Naive thymus-derived CD4-positive, alpha-beta T cell (primary cell): ENCODE measurements at regions of chr7 and their contacts with region 1.

Region 1: GRCh38 chr7:100126931-100127865 is at the start of gene MBLAC1:
- DNase-seq: peak; percentile 80 to 95 (median 91)
- ATAC-seq: peak; percentile 95
- H3K4me3 ChIP-seq: peak within 1 kb of the TSS; percentile 99
- H3K4me3 Mint-ChIP-seq: peak within 1 kb of the TSS; percentile 95 to 100 (median 98)
- H3K27ac ChIP-seq: peak within 1 kb of the TSS; percentile 98
- H3K27ac Mint-ChIP-seq: peak within 1 kb of the TSS; percentile 98 to 100 (median 99)
- H3K4me1 ChIP-seq: peaks cover 20 to 25% of the 10 kb centered on the region in 2 donors
- H3K4me1 Mint-ChIP-seq: peaks cover 13 to 46% (median 26%) of the 10 kb centered on the region in 7 donors
- H3K27me3 ChIP-seq: no peaks in the 10 kb centered on the region
- H3K27me3 Mint-ChIP-seq: no peaks in the 10 kb centered on the region
- total RNA-seq, gene MBLAC1: 4.5 to 6.3 (median 5.8) TPM

Region 2: DNA sequence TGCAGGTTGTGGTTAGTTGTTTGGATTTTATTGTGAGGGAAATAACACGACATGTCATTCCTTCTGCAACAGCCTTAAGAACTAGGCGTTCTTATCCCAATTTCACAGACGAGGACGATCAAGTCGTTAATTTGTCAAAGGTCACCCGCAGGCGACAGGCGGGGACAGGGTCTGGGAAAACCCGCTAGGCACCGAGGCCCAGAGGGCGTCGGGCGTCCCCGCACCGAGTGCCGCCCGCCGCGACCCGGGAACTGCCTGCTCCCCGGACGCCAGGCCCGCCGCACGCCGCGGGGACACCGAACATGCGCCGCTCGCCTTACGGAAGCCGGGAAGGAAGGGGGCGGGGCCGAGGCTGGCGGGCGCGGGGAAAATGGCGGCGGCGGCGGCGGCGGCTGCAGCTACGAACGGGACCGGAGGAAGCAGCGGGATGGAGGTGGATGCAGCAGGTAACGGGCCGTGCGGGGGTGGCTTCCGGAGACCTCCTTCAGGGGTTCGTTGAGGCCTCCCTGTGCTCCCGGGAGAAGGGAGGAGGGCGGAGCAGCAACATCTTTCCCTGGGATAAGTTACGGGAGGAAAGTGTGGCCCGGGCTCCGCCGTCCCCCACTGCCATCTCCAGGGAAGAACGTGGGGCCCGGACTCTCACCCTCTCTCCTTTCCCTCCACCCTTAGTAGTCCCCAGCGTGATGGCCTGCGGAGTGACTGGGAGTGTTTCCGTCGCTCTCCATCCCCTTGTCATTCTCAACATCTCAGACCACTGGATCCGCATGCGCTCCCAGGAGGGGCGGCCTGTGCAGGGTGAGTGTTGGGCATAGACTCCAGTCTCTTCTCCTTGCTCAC is 38.4 kb before region 1 on chr7 and contains the start of gene COPS6:
- CTCF ChIA-PET with region 1: interaction called, 4 read pairs
- POLR2A ChIA-PET with region 1: interaction called, 14 read pairs
- intact Hi-C with region 1: loop called in 1 of 2 experiments (anchors 2 kb)
- DNase-seq: peak; percentile 78 to 96 (median 86)
- ATAC-seq: peak; percentile 95
- H3K4me3 ChIP-seq: peak within 1 kb of the TSS; percentile 61
- H3K4me3 Mint-ChIP-seq: peak within 1 kb of the TSS; percentile 82 to 96 (median 90)
- H3K27ac ChIP-seq: peak within 1 kb of the TSS; percentile 87
- H3K27ac Mint-ChIP-seq: peak within 1 kb of the TSS; percentile 89 to 96 (median 94)
- H3K4me1 ChIP-seq: peaks cover 6 to 11% of the 10 kb centered on the region in 2 donors
- H3K4me1 Mint-ChIP-seq: peaks cover 11 to 40% (median 20%) of the 10 kb centered on the region in 7 donors
- H3K27me3 ChIP-seq: no peaks in the 10 kb centered on the region
- H3K27me3 Mint-ChIP-seq: peaks cover 0 to 12% (median 0%) of the 10 kb centered on the region in 5 donors
- total RNA-seq, gene COPS6: 65.7 to 103 (median 80.1) TPM

Region 3: GRCh38 chr7:100137851-100138760 is 10.9 kb after region 1 on chr7:
- CTCF ChIA-PET with region 1: interaction called, 5 read pairs
- POLR2A ChIA-PET with region 1: interaction called, 15 read pairs
- intact Hi-C with region 1: no loop called
- DNase-seq: peak in 3 of 9 donors; percentile 31 to 41 (median 35)
- ATAC-seq: peak; percentile 42
- H3K4me3 ChIP-seq: peak overlapping the region; percentile 9
- H3K4me3 Mint-ChIP-seq: peak overlapping the region in 7 of 10 donors; percentile 1 to 69 (median 54)
- H3K27ac ChIP-seq: peak overlapping the region; percentile 28
- H3K27ac Mint-ChIP-seq: peak overlapping the region in 8 of 9 donors; percentile 57 to 90 (median 70)
- H3K4me1 ChIP-seq: peaks cover 0 to 11% of the 10 kb centered on the region in 2 donors
- H3K4me1 Mint-ChIP-seq: peaks cover 0 to 16% (median 13%) of the 10 kb centered on the region in 7 donors
- H3K27me3 ChIP-seq: no peaks in the 10 kb centered on the region
- H3K27me3 Mint-ChIP-seq: no peaks in the 10 kb centered on the region

Region 4: DNA sequence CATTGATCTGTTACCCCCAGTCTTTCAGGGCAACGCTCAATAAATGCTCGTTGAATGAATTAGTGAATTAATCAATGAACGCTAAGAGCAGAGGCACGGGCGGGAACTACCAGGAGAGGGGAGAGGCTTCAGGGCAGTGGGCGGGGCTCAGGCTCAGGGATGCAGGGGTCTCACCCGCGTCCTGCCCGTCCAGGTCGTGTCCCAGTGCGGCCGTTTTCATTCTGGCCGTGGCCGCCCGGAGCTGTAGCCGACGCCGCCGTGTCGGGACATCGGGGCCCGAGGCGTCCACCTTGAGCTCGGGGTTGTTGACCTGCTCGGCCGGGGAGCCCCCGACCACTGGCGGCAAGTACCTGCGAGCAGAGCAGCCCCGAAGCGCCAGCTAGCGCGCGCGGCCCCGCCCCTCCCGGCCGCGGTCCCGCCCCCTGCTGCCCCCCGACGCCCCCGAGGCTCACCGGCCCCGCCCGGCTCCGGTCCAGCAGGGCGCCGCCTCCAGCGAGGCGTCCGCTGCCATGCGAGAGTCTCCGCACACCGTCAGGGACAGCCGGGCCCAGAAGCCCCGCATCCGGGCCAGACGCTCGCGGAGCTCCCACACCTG is 44.0 kb after region 1 on chr7:
- CTCF ChIA-PET with region 1: interaction called, 18 read pairs
- POLR2A ChIA-PET with region 1: interaction called, 14 read pairs
- intact Hi-C with region 1: loop called in 1 of 2 experiments (anchors 5 kb)
- DNase-seq: peak in 3 of 9 donors; percentile 23 to 38 (median 25)
- ATAC-seq: peak; percentile 40
- H3K4me3 ChIP-seq: peak overlapping the region; percentile 56
- H3K4me3 Mint-ChIP-seq: peak overlapping the region; percentile 65 to 95 (median 90)
- H3K27ac ChIP-seq: peak overlapping the region; percentile 81
- H3K27ac Mint-ChIP-seq: peak overlapping the region in 8 of 9 donors; percentile 86 to 99 (median 95)
- H3K4me1 ChIP-seq: peaks cover 21 to 52% of the 10 kb centered on the region in 2 donors
- H3K4me1 Mint-ChIP-seq: peaks cover 51 to 78% (median 66%) of the 10 kb centered on the region in 7 donors
- H3K27me3 ChIP-seq: no peaks in the 10 kb centered on the region
- H3K27me3 Mint-ChIP-seq: peaks cover 0 to 27% (median 5%) of the 10 kb centered on the region in 5 donors

Region 5: DNA sequence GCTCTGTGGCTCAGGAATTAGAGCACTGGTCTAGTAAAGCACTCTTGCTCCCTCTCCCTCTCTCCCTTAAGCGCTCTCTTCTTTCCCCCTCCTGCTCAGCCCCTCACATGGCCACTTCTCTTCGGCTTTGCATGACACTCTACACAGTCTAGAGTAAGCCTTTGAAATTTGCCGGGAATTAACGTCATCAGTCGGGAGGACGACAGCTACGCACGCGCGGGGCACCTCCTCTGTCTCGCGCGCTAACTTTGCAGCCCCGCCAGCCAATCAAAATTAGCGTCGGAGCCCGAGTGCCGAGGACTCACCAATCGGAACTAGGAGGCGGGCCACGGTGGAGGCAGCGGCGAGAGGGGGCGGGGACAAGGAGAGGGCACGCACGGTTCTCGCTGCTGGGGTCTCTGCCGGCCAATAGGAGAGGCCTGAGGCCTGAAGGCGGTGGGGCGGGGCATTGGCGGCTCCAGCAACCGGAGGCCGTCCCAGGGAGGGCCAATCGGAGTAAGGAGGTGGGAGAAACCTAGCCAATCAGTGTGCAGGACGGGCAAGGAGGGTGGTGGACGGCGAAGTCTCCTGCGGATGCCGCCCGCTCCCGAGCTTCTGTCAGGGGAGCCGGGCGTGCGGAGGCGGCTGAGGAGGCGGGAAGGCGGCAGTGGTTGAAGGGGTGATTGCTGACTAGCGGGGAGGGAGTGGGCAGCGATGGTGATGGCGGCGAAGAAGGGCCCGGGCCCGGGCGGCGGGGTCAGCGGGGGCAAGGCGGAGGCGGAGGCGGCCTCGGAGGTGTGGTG is 411.6 kb after region 1 on chr7 and contains the start of gene AGFG2:
- CTCF ChIA-PET with region 1: no interaction called
- POLR2A ChIA-PET with region 1: no interaction called
- intact Hi-C with region 1: loop called in 1 of 2 experiments (anchors 1 kb)
- DNase-seq: peak; percentile 98 to 100 (median 100)
- ATAC-seq: peak; percentile 99
- H3K4me3 ChIP-seq: peak within 1 kb of the TSS; percentile 73
- H3K4me3 Mint-ChIP-seq: peak within 1 kb of the TSS; percentile 85 to 100 (median 96)
- H3K27ac ChIP-seq: peak within 1 kb of the TSS; percentile 64
- H3K27ac Mint-ChIP-seq: peak within 1 kb of the TSS; percentile 82 to 97 (median 90)
- H3K4me1 ChIP-seq: peaks cover 30 to 39% of the 10 kb centered on the region in 2 donors
- H3K4me1 Mint-ChIP-seq: peaks cover 26 to 53% (median 48%) of the 10 kb centered on the region in 7 donors
- H3K27me3 ChIP-seq: no peaks in the 10 kb centered on the region
- H3K27me3 Mint-ChIP-seq: peaks cover 0 to 2% (median 0%) of the 10 kb centered on the region in 5 donors
- total RNA-seq, gene AGFG2: 15.8 to 42.4 (median 23.3) TPM